ENCODE measurements at regions of chr7 and their contacts with region 1.

Region 1: GRCh38 chr7:36986429-36987362 is 262.4 kb upstream of the AOAH start:
- DNase-seq: peak; percentile 79
- H3K4me3 ChIP-seq: peak overlapping the region; percentile 6 to 56; a peak in 3 of 4 replicates
- H3K27ac ChIP-seq: peak overlapping the region in 1 of 2 experiments; percentile 93; a peak in 2 of 4 replicates
- H3K4me1 ChIP-seq: peaks cover 0 to 35% of the 10 kb centered on the region in 2 experiments; a peak in 2 of 4 replicates
- H3K27me3 ChIP-seq: peaks cover 32% of the 10 kb centered on the region; the same call in 1 of the 2 replicates
- CTCF ChIP-seq: peak; percentile 99
- EP300 ChIP-seq: peak in 1 of 2 experiments; percentile 49; a peak in 2 of 4 replicates
- RAD21 ChIP-seq: peak; percentile 91

Region 2: DNA sequence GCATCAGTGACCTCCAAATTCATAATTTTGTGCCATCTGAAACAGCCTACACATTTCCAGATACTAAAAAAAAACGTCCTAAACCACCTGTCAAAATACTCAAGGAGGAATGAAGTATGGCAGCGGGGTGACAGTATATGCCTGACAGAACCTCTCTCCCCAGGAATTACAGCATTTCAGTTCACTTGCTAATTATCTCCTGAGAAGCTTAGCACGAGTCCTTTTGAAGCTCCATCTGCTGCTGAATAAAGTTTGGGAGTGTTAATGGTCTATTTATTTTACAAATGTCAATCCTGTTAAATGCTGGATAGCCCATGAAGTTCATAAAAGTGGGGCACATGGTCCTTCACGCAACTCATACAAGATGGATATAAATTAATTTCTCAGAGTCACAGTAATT is 626.5 kb before region 1 on chr7:
- CTCF ChIA-PET with region 1: no interaction called
- POLR2A ChIA-PET with region 1: no interaction called
- DNase-seq: no peak
- H3K4me3 ChIP-seq: no peak overlapping the region
- H3K27ac ChIP-seq: no peak overlapping the region
- H3K4me1 ChIP-seq: no peaks in the 10 kb centered on the region; a peak in 2 of 4 replicates
- H3K27me3 ChIP-seq: no peaks in the 10 kb centered on the region
- CTCF ChIP-seq: no peak
- EP300 ChIP-seq: no peak
- RAD21 ChIP-seq: no peak

Region 3: DNA sequence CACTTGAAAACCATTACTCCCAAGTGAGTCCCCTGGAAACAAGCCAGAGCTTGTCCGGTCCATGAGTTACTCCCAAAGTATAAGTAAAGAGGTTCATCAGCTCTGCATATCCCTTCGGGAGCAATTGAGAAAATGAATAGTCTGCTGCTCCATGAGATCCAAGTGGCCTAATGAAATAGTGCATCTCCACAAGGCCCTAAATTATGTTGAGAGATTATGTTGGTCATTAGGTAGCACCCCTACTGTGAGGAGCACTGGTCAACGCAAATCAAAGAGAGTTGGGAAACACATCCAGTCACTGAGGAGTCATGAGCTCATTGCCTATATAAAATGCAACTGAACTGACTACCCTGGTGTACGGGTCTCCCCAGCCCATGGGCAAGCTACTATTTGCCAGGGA is 56.9 kb before region 1 on chr7:
- CTCF ChIA-PET with region 1: interaction called, 10 read pairs
- POLR2A ChIA-PET with region 1: no interaction called
- DNase-seq: no peak
- H3K4me3 ChIP-seq: no peak overlapping the region
- H3K27ac ChIP-seq: no peak overlapping the region; a peak in 1 of 4 replicates
- H3K4me1 ChIP-seq: peaks cover 0 to 38% of the 10 kb centered on the region in 2 experiments; a peak in 2 of 4 replicates
- H3K27me3 ChIP-seq: no peaks in the 10 kb centered on the region
- CTCF ChIP-seq: no peak
- EP300 ChIP-seq: no peak
- RAD21 ChIP-seq: no peak

Region 4: GRCh38 chr7:36999626-37000485 is 13.2 kb after region 1 on chr7:
- CTCF ChIA-PET with region 1: interaction called, 65 read pairs
- POLR2A ChIA-PET with region 1: no interaction called
- DNase-seq: no peak
- H3K4me3 ChIP-seq: no peak overlapping the region
- H3K27ac ChIP-seq: no peak overlapping the region
- H3K4me1 ChIP-seq: no peaks in the 10 kb centered on the region
- H3K27me3 ChIP-seq: no peaks in the 10 kb centered on the region
- CTCF ChIP-seq: no peak
- EP300 ChIP-seq: no peak
- RAD21 ChIP-seq: no peak

Region 5: GRCh38 chr7:37016064-37016878 is 29.6 kb after region 1 on chr7:
- CTCF ChIA-PET with region 1: interaction called, 14 read pairs
- POLR2A ChIA-PET with region 1: interaction called, 3 read pairs
- DNase-seq: no peak
- H3K4me3 ChIP-seq: no peak overlapping the region
- H3K27ac ChIP-seq: no peak overlapping the region
- H3K4me1 ChIP-seq: peaks cover 0 to 6% of the 10 kb centered on the region in 2 experiments; a peak in 2 of 4 replicates
- H3K27me3 ChIP-seq: peaks cover 14% of the 10 kb centered on the region
- CTCF ChIP-seq: no peak
- EP300 ChIP-seq: no peak
- RAD21 ChIP-seq: no peak

Region 6: DNA sequence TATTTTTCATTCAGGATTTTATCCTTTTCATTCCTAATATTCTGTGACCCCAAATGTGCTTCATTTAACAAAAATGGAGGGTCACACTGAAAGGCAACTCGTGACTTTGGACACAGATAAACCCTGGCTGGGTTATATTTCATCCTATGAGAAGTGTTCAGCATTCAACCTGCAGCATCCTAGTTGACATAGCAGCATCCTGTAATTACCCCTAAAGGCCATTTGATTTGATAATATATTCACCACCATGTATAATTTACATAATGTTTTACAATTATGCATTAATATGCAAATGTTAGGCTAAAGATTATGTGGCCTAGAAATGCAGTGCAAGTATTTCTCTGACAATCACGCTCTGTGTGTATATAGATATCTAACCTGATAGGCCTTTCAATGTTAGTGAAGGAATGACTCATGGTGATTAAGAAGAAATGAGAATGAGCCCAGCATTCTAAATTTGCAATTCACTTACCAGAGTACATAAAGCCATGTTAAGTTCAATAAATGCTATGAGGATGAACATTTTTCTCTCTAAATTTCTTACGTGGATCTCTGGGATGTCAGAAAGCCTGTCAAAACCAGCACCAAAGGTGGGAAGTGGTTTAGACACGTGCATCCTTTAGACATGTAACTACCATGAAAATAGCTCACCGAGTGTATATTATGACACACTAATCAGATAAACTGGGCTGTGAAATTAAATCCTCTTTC is 75.3 kb after region 1 on chr7:
- CTCF ChIA-PET with region 1: interaction called, 11 read pairs
- POLR2A ChIA-PET with region 1: no interaction called
- DNase-seq: no peak
- H3K4me3 ChIP-seq: no peak overlapping the region; a peak in 1 of 4 replicates
- H3K27ac ChIP-seq: peak overlapping the region in 1 of 2 experiments; percentile 76; a peak in 2 of 4 replicates
- H3K4me1 ChIP-seq: peaks cover 0 to 15% of the 10 kb centered on the region in 2 experiments; a peak in 2 of 4 replicates
- H3K27me3 ChIP-seq: no peaks in the 10 kb centered on the region
- CTCF ChIP-seq: no peak
- EP300 ChIP-seq: no peak
- RAD21 ChIP-seq: no peak

Region 7: DNA sequence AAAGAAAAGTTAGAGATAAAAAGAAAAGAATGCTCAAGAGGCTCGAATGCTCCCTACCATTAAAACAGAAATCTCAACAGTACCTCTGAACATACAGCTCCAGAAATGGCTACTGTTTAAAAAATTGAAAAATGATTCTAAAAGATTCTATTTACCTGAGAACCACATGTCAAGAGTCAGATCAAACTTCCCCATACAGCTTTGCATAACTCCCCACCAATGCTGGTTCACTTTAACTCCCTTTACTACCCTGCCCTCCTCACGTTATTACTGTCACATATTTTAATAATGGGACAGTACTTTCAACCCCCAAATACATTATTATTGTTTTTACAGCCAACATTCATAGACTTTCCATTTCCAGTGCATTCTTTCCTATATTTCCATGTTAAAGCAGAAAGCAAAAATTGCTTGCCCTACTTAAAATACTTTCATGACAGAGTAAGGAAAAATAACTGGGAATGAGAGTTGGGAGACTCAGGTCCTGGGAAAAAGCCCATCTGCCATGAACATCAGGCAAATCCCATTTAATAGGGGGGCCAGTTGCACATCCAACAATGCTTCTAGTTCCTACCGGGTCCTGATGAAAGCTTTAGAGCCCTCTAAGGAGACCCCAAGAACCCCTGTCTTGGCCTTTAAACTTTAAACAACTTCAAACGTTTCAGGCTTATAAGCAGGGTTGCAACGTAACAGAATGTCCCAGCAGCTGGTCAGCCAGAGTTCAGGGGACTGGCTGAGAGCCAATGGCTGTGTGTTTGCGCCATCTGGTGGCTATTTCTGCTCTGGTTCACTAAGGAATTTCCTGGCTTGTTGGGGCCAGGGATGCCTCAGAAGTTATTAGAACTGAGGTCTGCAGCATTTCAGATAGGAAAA is 214.5 kb after region 1 on chr7:
- CTCF ChIA-PET with region 1: interaction called, 95 read pairs
- POLR2A ChIA-PET with region 1: no interaction called
- DNase-seq: peak; percentile 83
- H3K4me3 ChIP-seq: no peak overlapping the region
- H3K27ac ChIP-seq: no peak overlapping the region
- H3K4me1 ChIP-seq: peaks cover 0 to 15% of the 10 kb centered on the region in 2 experiments; a peak in 2 of 4 replicates
- H3K27me3 ChIP-seq: no peaks in the 10 kb centered on the region
- CTCF ChIP-seq: peak; percentile 99
- EP300 ChIP-seq: peak in 1 of 2 experiments; percentile 26; a peak in 1 of 4 replicates
- RAD21 ChIP-seq: peak; percentile 91

Region 8: DNA sequence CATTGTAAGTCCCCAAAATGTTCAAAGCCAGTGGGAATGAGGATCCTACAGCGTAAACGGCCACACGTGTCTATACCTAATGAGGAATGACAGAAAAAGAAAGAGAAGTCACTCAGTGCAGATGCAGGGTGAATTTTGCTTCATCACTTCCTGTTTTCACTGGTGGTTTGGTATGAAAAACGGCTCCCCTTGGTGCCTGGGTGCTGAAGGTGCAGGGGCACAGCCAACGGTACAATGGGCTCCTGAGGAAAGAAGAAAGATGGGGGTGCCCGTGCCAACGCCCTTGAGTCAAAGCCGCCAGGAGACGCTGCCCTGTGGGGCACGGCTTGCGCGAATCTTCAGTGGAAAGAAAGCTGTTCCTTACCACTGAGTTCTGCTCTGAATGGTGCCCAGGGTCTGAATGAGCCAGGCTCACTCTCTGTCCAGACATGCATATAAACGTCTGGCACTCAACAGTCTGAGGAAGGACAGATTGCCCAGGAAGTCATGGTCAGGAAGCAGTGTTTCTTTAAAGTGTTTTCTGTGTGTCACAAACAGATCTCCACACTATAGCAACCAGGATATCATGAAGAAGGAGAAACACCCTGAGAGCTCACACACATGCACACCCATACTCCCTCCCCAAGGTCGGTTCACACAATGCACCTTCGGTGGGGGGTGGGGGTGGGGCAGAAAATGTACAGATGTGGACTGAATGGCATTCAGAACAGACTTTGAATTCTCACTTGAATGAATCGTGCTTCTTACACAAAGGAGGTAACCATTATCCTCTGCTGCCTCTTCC is 356.2 kb after region 1 on chr7:
- CTCF ChIA-PET with region 1: no interaction called
- POLR2A ChIA-PET with region 1: no interaction called
- DNase-seq: peak; percentile 66
- H3K4me3 ChIP-seq: no peak overlapping the region
- H3K27ac ChIP-seq: peak overlapping the region in 1 of 2 experiments; percentile 80; a peak in 2 of 4 replicates
- H3K4me1 ChIP-seq: peaks cover 0 to 20% of the 10 kb centered on the region in 2 experiments; a peak in 1 of 4 replicates
- H3K27me3 ChIP-seq: no peaks in the 10 kb centered on the region
- CTCF ChIP-seq: no peak
- EP300 ChIP-seq: peak in 1 of 2 experiments; percentile 20; a peak in 1 of 4 replicates
- RAD21 ChIP-seq: no peak

Measured in SK-N-SH (cell line).